ENCODE measurements at regions of chr2 and their contacts with region 1.

Region 1: DNA sequence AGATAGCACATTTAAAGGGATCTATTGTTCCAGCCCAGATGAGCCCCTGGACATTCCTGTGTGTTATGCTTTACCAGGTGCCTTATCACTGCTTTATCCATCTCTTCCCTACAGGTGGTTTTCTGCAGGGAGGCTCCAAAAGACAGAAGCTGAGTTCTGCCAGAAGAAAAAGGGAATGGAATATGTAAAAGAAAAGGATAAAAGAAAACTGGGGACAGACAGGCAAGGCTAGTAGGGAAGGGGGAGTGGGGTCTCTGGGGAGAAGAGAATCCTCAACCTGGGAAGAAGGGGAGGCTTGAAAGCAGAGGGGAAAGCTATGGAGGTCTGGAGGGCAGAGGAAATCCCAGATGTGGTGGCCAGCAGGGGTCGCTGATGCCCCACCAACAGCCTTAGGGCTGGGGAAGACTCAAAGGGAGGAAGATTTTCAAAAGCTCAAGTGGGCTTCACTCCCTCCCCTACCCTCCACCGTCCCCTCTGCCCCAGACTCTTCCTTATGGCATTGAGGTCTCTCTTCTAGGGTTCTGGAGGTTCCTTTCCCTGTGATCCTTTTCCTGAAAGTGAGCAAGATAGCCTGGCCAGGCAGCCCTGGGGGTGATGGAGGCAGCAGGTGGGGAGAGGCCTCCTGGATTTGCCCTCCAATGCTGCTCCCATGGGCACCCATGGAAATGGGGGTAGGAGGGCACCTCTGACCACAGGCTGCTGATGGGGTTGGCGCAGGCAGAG is 178.1 kb upstream of the PKDCC start:
- DNase-seq: peak; percentile 75 to 90
- ATAC-seq: peak; percentile 92 to 98 (median 93)
- H3K4me3 ChIP-seq: no peak overlapping the region
- H3K27ac ChIP-seq: peak overlapping the region; percentile 55
- H3K4me1 ChIP-seq: peaks cover 9% of the 10 kb centered on the region
- H3K27me3 ChIP-seq: no peaks in the 10 kb centered on the region
- CTCF ChIP-seq: peak; percentile 94

Region 2: DNA sequence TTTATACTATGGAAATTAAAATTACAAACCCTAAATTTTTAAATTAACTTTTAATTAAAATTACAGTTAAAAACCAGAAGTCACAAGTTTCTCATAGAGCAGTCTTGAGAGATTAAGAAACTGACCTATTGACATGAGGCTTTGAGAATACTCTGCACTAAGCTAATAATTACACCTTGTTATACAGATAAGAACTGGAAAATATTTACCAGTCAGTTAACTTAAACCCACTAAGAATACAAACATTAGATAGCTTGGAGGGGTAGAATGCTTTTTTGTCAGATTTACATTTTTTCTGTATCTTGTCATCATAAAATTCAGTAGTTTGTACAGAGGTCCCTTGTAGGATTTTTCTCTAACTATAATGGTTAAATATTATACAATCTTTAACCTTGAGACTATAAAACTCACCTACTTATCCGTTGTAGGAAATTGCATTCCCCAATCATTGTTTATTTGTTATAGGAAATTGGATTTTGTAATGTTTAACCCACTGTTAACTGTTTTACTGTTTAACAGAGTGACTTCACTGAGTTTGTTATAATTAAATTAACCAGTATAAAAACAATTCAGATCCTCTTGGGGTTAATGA is 41.6 kb before region 1 on chr2:
- intact Hi-C with region 1: no loop called
- DNase-seq: no peak
- ATAC-seq: no peak
- H3K4me3 ChIP-seq: no peak overlapping the region
- H3K27ac ChIP-seq: no peak overlapping the region
- H3K4me1 ChIP-seq: no peaks in the 10 kb centered on the region
- H3K27me3 ChIP-seq: peaks cover 2 to 15% (median 3%) of the 10 kb centered on the region in 3 donors
- CTCF ChIP-seq: no peak

Region 3: GRCh38 chr2:42086500-42086953 is 216.8 kb after region 1 on chr2:
- intact Hi-C with region 1: loop called (anchors 1 to 2 kb)
- DNase-seq: no peak
- ATAC-seq: peak; percentile 73 to 87 (median 79)
- H3K4me3 ChIP-seq: no peak overlapping the region
- H3K27ac ChIP-seq: no peak overlapping the region
- H3K4me1 ChIP-seq: no peaks in the 10 kb centered on the region
- H3K27me3 ChIP-seq: no peaks in the 10 kb centered on the region
- CTCF ChIP-seq: peak; percentile 76

Region 4: DNA sequence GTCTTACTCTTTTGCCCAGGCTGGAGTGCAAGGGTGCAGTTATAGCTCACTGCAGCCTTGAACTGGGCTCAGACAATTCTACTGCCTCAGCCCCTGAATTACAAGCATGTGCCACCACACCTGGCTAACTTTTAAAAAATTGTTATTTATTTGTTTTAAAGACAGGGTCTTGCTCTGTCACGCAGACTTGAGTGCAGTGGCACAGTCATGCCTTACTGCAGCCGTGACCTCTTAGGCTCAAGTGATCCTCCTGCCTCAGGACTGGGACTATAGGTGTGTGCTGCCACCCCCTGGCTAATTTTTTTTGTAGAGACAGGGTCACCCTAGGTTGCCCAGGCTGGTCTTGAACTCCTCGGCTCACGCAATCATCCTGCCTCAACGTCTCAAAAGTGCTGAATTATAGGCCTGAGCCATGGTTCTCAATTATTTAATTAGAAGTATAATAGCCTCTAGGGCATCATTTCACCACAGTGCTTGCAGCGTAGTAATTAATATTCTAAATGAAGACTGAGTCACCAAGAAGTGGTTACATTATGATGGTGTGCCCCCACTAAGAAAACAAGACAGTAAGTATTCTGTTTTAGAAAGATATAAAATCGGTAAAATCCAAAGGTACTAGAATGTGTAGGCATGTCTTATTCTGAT is 369.1 kb after region 1 on chr2:
- intact Hi-C with region 1: loop called in 1 of 2 experiments (anchors 10 kb)
- DNase-seq: no peak
- ATAC-seq: peak; percentile 62 to 88 (median 84)
- H3K4me3 ChIP-seq: no peak overlapping the region
- H3K27ac ChIP-seq: no peak overlapping the region
- H3K4me1 ChIP-seq: no peaks in the 10 kb centered on the region
- H3K27me3 ChIP-seq: no peaks in the 10 kb centered on the region
- CTCF ChIP-seq: peak; percentile 46

Region 5: DNA sequence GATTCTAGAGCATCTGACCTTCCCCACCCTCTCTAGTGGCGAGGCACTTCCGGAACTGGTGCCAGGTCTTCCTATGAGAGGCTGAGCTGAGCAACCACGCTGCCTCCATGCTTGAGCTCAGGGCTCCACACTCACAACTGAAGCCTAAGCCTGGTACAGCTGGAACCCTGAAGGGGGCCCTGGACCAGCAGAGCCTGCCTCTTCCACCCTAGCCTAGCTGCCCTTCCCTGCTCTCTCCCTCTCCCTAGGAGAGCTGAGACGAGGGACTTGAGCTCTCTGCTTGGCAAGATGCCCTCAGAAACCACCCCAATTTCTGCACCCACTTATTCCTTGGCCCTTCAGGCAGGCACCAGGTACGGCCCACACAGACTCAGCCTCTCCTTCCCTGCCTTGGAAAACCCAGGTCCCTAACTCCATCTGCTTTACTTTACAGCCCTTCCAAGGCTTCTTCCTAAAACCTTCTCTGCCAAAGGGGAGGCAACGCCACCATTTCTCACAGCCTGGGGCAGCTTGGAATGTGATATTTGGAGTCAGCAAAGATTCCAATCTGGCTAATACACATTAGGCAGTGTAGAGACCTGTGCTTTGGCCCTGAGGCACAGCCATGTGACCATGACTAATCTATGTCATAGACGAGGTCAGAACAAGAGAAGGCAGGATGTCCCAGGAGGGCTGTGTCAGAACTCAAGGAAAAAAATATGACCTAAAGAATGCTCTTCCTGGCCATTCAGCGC is 472.5 kb after region 1 on chr2:
- intact Hi-C with region 1: loop called in 1 of 2 experiments (anchors 10 kb)
- DNase-seq: peak; percentile 61 to 76
- ATAC-seq: peak; percentile 95 to 98 (median 98)
- H3K4me3 ChIP-seq: peak overlapping the region; percentile 2
- H3K27ac ChIP-seq: peak overlapping the region; percentile 73
- H3K4me1 ChIP-seq: peaks cover 14% of the 10 kb centered on the region
- H3K27me3 ChIP-seq: no peaks in the 10 kb centered on the region
- CTCF ChIP-seq: no peak